Aorta (tissue), 5 donors: ENCODE measurements at regions of chr1 and their contacts with region 1.

Region 1: GRCh38 chr1:234842726-234843641 is 233.0 kb upstream of the IRF2BP2 start:
- DNase-seq: peak in 1 of 2 donors; percentile 57
- ATAC-seq: no peak
- H3K4me3 ChIP-seq: no peak overlapping the region
- H3K27ac ChIP-seq: no peak overlapping the region
- H3K4me1 ChIP-seq: no peaks in the 10 kb centered on the region
- H3K27me3 ChIP-seq: no peaks in the 10 kb centered on the region

Region 2: GRCh38 chr1:234645474-234645953 is 197.5 kb before region 1 on chr1:
- intact Hi-C with region 1: no loop called
- DNase-seq: no peak
- ATAC-seq: no peak
- H3K4me3 ChIP-seq: no peak overlapping the region
- H3K27ac ChIP-seq: no peak overlapping the region
- H3K4me1 ChIP-seq: no peaks in the 10 kb centered on the region
- H3K27me3 ChIP-seq: no peaks in the 10 kb centered on the region

Region 3: DNA sequence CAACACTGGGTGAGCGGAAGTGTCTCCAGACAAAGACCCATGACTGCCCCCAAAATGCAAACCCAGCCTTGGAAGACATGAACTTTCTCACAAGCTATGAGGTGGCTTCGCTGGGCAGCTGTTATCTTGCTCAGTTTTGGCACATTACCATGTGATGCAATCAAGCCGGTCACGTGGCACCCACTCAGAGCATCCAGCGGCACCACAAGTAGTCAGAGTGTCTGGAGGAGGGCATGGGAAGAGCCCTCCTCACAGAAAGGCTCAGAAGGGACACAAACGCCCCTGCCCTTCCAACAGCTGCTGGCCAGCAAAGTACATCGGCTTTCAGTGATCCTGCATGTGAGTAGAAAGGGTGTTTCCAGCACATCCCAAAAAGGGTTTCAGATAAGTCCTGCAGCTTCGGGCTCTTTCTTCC is 87.5 kb before region 1 on chr1:
- intact Hi-C with region 1: loop called in 1 of 2 experiments (anchors 10 kb)
- DNase-seq: peak; percentile 88
- ATAC-seq: peak; percentile 89
- H3K4me3 ChIP-seq: no peak overlapping the region
- H3K27ac ChIP-seq: no peak overlapping the region
- H3K4me1 ChIP-seq: no peaks in the 10 kb centered on the region
- H3K27me3 ChIP-seq: no peaks in the 10 kb centered on the region